GM12878 (cell line): ENCODE measurements at regions of chr17 and their contacts with region 1.

Region 1: GRCh38 chr17:39754161-39754951 is 16.6 kb downstream of the GRB7 start:
- DNase-seq: peak; percentile 87
- ATAC-seq: peak; percentile 82
- H3K4me3 ChIP-seq: peak overlapping the region; percentile 66
- H3K27ac ChIP-seq: peak overlapping the region; percentile 96
- H3K4me1 ChIP-seq: peaks cover 53% of the 10 kb centered on the region
- H3K27me3 ChIP-seq: no peaks in the 10 kb centered on the region
- CTCF ChIP-seq: peak; percentile 81 to 93 (median 88)
- EP300 ChIP-seq: peak; percentile 65 to 73; a peak in 3 of 4 replicates
- POLR2A ChIP-seq: peak; percentile 75
- RAD21 ChIP-seq: peak; percentile 80

Region 2: DNA sequence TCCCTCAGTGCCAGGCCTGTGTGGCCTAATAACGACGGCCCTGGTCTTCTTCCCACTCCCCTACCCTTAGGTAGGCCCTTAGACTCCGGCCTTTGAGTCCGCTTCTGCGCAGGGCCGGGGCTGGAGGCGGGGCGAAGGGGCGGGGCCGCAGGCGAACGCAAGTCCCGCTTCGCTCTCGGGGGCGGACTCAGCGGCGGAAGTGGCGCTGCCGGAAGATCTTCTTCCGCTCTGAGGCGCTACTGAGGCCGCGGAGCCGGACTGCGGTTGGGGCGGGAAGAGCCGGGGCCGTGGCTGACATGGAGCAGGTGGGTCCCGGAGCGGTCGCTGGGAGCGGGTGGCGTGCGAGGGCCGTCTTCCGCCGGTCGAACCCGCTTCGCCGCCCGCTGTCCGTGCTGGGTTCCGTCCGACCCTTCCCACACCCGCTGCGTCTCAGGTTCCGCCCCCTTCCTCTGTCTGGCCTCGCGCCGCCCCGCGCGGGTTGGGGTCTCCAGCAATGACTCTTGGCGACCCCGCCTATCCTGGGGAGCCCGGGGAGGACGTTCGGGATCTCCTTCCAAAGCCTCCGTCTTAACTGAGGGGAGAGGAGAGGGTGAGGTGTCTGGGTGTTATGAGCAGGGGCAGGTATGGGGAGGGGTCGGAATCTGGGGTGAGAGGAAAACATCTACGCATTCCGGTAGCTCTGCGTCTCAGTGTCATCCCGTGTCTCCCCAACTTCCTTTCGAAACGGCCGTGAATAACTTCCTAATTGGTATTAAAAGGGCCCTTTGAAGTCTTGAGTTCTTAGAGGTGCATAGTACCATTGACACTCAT is 117.2 kb before region 1 on chr17 and contains the start of gene STARD3:
- CTCF ChIA-PET with region 1: interaction called, 4 read pairs
- POLR2A ChIA-PET with region 1: no interaction called
- RAD21 ChIA-PET with region 1: interaction called, 3 read pairs
- SMC1A ChIA-PET with region 1: no interaction called
- in situ Hi-C with region 1: no loop called
- intact Hi-C with region 1: loop called (anchors 5 kb)
- DNase-seq: no peak
- ATAC-seq: peak; percentile 97
- H3K4me3 ChIP-seq: peak within 1 kb of the TSS; percentile 100
- H3K27ac ChIP-seq: peak within 1 kb of the TSS; percentile 90
- H3K4me1 ChIP-seq: peaks cover 20% of the 10 kb centered on the region
- H3K27me3 ChIP-seq: no peaks in the 10 kb centered on the region
- CTCF ChIP-seq: peak in 1 of 3 experiments; percentile 12; a peak in 2 of 6 replicates
- EP300 ChIP-seq: no peak
- POLR2A ChIP-seq: peak; percentile 91
- RAD21 ChIP-seq: no peak
- polyA plus RNA-seq, gene STARD3: 0.08 to 1.4 TPM

Region 3: GRCh38 chr17:39730095-39730921 is 24.0 kb before region 1 on chr17 and contains the start of gene MIEN1:
- CTCF ChIA-PET with region 1: interaction called, 39 read pairs
- POLR2A ChIA-PET with region 1: interaction called, 4 read pairs
- RAD21 ChIA-PET with region 1: interaction called, 11 read pairs
- SMC1A ChIA-PET with region 1: interaction called, 9 read pairs
- in situ Hi-C with region 1: no loop called
- intact Hi-C with region 1: loop called (anchors 2 kb)
- DNase-seq: peak; percentile 43
- ATAC-seq: peak; percentile 96
- H3K4me3 ChIP-seq: peak within 1 kb of the TSS; percentile 91
- H3K27ac ChIP-seq: peak within 1 kb of the TSS; percentile 88
- H3K4me1 ChIP-seq: peaks cover 3% of the 10 kb centered on the region; the same call in 1 of the 2 replicates
- H3K27me3 ChIP-seq: no peaks in the 10 kb centered on the region
- CTCF ChIP-seq: peak; percentile 71 to 90 (median 85)
- EP300 ChIP-seq: 0 out of 4 replicates have a peak, but pooled peaks of 1 of the 2 experiments have one; percentile 13
- POLR2A ChIP-seq: peak; percentile 98
- RAD21 ChIP-seq: peak; percentile 44
- polyA plus RNA-seq, gene MIEN1: 24.9 to 42.5 TPM

Region 4: DNA sequence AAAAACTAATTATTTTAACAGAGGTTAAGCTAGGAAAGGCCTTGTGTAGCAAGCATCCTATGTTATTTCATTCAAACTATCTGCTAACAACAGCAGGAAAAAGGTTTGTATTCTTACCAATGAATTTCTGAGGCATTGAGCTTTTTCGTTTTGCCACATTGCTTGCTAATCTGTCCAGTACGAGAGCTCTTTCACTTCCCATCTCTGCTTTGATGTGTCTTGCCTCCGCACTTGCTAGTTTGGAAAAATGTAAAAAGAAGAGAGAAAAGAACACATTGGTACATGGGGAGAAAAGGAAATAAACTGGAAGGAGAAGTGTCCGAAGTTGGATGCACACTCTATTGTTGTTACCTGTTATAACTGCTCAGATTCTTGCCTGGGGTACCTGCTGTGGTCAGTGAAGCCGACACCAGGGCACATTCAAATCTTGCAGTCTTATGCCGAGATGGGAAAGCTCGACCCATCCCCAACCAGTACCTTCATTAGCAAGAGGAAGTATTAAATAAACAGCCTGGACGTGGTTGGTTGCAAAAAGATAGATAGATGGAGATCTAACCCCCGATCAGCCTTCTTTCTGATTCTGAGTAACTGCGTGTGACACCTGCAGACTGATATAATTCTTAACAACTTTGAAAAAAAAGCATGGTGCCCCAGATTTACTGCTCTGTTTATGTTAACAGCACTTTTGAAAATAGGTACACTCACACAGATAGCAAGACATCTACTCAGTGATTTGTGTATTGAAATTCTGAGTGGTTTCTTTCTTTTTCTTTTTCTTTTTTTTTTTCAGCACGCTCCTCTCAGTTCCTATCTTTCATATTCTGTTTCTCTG is 23.4 kb after region 1 on chr17:
- CTCF ChIA-PET with region 1: interaction called, 30 read pairs
- POLR2A ChIA-PET with region 1: interaction called, 9 read pairs
- RAD21 ChIA-PET with region 1: interaction called, 57 read pairs
- SMC1A ChIA-PET with region 1: interaction called, 44 read pairs
- in situ Hi-C with region 1: no loop called
- intact Hi-C with region 1: loop called (anchors 1 kb)
- DNase-seq: peak; percentile 73
- ATAC-seq: peak; percentile 68
- H3K4me3 ChIP-seq: peak overlapping the region; percentile 79
- H3K27ac ChIP-seq: peak overlapping the region; percentile 95
- H3K4me1 ChIP-seq: peaks cover 44% of the 10 kb centered on the region
- H3K27me3 ChIP-seq: no peaks in the 10 kb centered on the region
- CTCF ChIP-seq: no peak
- EP300 ChIP-seq: peak; percentile 40 to 58; a peak in 2 of 4 replicates
- POLR2A ChIP-seq: peak; percentile 43; the same call in 1 of the 2 replicates
- RAD21 ChIP-seq: no peak

Region 5: DNA sequence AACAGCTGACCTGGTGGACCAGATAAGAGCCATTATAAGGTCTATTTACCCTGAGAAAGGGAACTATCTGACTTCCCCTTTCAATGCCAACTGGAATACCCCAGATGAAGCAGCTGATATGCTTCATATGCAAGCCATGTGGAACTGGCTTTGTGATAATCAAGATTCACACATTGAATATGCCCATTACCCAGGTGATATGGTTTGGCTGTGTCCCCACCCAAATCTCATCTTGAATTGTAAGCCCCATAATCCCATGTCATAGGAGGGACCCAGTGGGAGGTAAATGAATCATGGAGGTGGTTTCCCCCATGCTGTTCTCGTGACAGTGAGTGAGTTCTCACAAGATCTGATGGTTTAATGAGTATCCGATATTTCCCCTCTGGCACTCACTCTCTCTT is 67.7 kb after region 1 on chr17:
- CTCF ChIA-PET with region 1: interaction called, 5 read pairs
- POLR2A ChIA-PET with region 1: interaction called, 3 read pairs
- RAD21 ChIA-PET with region 1: interaction called, 24 read pairs
- SMC1A ChIA-PET with region 1: interaction called, 10 read pairs
- in situ Hi-C with region 1: no loop called
- intact Hi-C with region 1: no loop called
- DNase-seq: no peak
- ATAC-seq: peak; percentile 25
- H3K4me3 ChIP-seq: no peak overlapping the region
- H3K27ac ChIP-seq: peak overlapping the region; percentile 65
- H3K4me1 ChIP-seq: peaks cover 42% of the 10 kb centered on the region
- H3K27me3 ChIP-seq: no peaks in the 10 kb centered on the region
- CTCF ChIP-seq: no peak
- EP300 ChIP-seq: no peak
- POLR2A ChIP-seq: no peak
- RAD21 ChIP-seq: no peak

Region 6: DNA sequence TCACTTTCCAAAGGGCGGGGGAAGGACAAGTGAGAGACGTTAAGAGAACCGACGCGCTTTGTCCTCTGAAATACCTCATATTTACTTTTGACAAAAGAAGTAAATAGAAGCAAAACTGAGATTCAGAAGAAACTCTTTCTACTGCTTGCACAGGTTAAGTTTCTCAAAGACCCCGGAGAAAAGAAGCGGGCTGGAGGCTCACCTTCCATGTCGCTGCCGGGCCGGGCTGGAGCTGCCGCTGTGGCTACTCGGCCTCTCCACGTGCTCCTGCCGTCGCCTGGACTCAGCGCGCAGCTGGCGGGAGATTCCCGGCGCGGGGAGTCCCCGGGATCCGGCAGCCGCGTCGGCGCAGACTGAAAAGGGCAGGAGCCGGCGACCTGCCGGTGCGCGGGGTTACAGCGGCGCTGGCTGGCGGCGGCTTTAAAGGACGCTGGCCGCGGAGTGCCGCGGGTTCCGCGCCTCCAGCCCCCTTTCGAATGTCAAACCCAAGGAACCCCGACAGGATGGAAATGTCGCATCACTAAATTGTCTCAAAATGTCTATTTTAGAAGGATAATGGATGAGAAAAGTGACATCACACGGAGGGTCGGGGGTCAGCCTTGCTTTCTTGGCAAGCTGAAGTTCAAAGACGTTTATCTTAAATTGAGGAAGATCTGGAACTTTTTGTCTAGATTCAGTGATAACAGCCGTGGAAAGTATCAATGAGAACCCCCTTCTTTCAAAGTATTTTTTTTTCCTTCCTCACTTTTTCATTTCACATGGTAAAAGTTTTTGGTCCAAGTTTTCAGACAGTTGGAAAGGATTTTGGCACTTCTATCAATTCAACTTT is 109.8 kb after region 1 on chr17 and contains the start of gene IKZF3:
- CTCF ChIA-PET with region 1: interaction called, 32 read pairs
- POLR2A ChIA-PET with region 1: interaction called, 32 read pairs
- RAD21 ChIA-PET with region 1: interaction called, 28 read pairs
- SMC1A ChIA-PET with region 1: interaction called, 50 read pairs
- in situ Hi-C with region 1: loop called (anchors 5 kb)
- intact Hi-C with region 1: loop called (anchors 1 kb)
- DNase-seq: no peak
- ATAC-seq: peak; percentile 57
- H3K4me3 ChIP-seq: peak within 1 kb of the TSS; percentile 78
- H3K27ac ChIP-seq: peak within 1 kb of the TSS; percentile 100
- H3K4me1 ChIP-seq: peaks cover 35% of the 10 kb centered on the region
- H3K27me3 ChIP-seq: no peaks in the 10 kb centered on the region
- CTCF ChIP-seq: peak; percentile 53 to 85 (median 59); a peak in 5 of 6 replicates
- EP300 ChIP-seq: peak; percentile 20 to 34; a peak in 1 of 4 replicates
- POLR2A ChIP-seq: peak; percentile 89
- RAD21 ChIP-seq: peak; percentile 77
- polyA plus RNA-seq, gene IKZF3: 5.5 to 14.0 TPM

Region 7: GRCh38 chr17:39974433-39974832 is 220.1 kb after region 1 on chr17:
- CTCF ChIA-PET with region 1: interaction called, 4 read pairs
- POLR2A ChIA-PET with region 1: interaction called, 11 read pairs
- RAD21 ChIA-PET with region 1: interaction called, 8 read pairs
- SMC1A ChIA-PET with region 1: no interaction called
- in situ Hi-C with region 1: no loop called
- intact Hi-C with region 1: no loop called
- DNase-seq: no peak
- ATAC-seq: no peak
- H3K4me3 ChIP-seq: no peak overlapping the region
- H3K27ac ChIP-seq: no peak overlapping the region
- H3K4me1 ChIP-seq: peaks cover 1% of the 10 kb centered on the region; the same call in 1 of the 2 replicates
- H3K27me3 ChIP-seq: peaks cover 0 to 4% of the 10 kb centered on the region in 2 experiments; a peak in 2 of 4 replicates
- CTCF ChIP-seq: no peak
- EP300 ChIP-seq: no peak
- POLR2A ChIP-seq: no peak
- RAD21 ChIP-seq: no peak